Naive thymus-derived CD8-positive, alpha-beta T cell (primary cell): ENCODE measurements at regions of chr12 and their contacts with region 1.

Region 1: DNA sequence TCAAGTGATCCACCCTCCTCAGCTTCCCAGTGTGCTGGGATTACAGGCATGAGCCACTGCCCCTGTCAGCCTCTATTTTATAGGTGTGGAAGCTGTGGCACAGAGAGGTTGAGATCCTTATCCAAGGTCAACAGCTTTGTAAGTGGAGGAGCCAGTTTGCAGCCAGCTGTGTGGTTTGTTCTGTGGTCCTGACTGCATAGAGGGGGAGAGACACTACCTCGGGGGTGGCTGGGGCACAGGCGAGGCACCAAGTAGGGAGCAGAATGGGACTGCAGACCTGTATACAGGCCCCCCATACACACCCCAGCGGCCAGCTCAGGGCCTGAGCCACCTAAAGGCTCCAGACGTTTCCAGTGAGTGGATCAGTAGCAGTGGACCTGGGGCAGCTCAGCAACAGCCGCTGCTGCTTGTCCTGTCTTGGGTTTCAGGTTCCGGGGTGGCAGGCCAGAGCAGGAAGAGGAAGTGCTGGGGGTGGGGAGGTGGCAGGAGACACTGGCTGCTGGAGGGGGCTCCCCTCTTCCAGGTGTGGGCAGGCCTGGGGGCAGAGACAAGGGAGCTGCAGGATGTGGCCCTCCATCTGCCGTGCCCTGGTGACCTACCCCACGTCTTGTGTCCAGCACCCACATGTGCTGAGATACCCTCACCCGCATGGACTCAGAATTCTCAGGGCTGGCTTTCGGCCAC is 11.0 kb downstream of the ORAI1 start:
- DNase-seq: peak; percentile 23 to 78 (median 52)
- ATAC-seq: peak; percentile 72 to 84
- H3K4me3 Mint-ChIP-seq: peak overlapping the region; percentile 64 to 85 (median 78)
- H3K27ac Mint-ChIP-seq: peak overlapping the region; percentile 82 to 97 (median 94)
- H3K4me1 Mint-ChIP-seq: peaks cover 24 to 82% (median 65%) of the 10 kb centered on the region in 4 donors
- H3K27me3 Mint-ChIP-seq: no peaks in the 10 kb centered on the region

Region 2: DNA sequence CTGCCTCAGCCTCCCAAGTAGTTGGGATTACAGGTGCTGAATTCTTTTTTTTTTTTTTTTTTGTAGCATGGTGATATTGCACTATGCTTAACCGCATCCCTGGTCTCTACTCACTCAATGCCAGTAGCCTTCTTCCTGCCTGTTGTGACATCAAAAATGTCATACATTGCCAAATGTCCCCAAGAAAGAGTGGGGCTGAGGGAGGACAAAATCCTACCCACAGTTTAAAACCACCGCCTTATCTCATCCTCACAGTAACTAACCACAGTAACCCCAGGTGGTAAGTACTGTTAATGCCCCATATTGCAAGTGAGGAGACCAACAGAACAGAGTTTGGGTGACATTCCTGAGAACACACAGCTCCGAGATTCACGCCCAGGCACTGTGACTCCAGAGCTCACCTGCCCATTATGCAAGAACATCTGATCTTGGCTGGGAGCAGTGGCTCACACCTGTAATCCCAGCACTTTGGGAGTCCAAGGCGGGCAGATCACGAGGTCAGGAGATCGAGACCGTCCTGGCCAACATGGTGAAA is 12.5 kb after region 1 on chr12:
- POLR2A ChIA-PET with region 1: interaction called, 59 read pairs
- DNase-seq: peak in 2 of 10 donors; percentile 21 to 41
- ATAC-seq: peak; percentile 59 to 77
- H3K4me3 Mint-ChIP-seq: peak overlapping the region in 9 of 10 donors; percentile 12 to 71 (median 53)
- H3K27ac Mint-ChIP-seq: peak overlapping the region in 9 of 10 donors; percentile 60 to 94 (median 81)
- H3K4me1 Mint-ChIP-seq: peaks cover 14 to 40% (median 33%) of the 10 kb centered on the region in 4 donors
- H3K27me3 Mint-ChIP-seq: no peaks in the 10 kb centered on the region

Region 3: GRCh38 chr12:121657305-121658008 is 20.1 kb after region 1 on chr12:
- POLR2A ChIA-PET with region 1: interaction called, 59 read pairs
- DNase-seq: no peak
- ATAC-seq: no peak
- H3K4me3 Mint-ChIP-seq: peak overlapping the region in 8 of 10 donors; percentile 27 to 94 (median 60)
- H3K27ac Mint-ChIP-seq: peak overlapping the region; percentile 5 to 100 (median 98)
- H3K4me1 Mint-ChIP-seq: peaks cover 26 to 71% (median 59%) of the 10 kb centered on the region in 4 donors
- H3K27me3 Mint-ChIP-seq: no peaks in the 10 kb centered on the region